Transverse colon (tissue), 4 donors: ENCODE measurements at regions of chr2 and their contacts with region 1.

Region 1: GRCh38 chr2:221831051-221831450 is 258.9 kb upstream of the EPHA4 start:
- DNase-seq: no peak
- H3K4me3 ChIP-seq: no peak overlapping the region
- H3K27ac ChIP-seq: no peak overlapping the region
- H3K4me1 ChIP-seq: no peaks in the 10 kb centered on the region
- H3K27me3 ChIP-seq: no peaks in the 10 kb centered on the region
- CTCF ChIP-seq: no peak
- EP300 ChIP-seq: no peak
- POLR2A ChIP-seq: no peak

Region 2: GRCh38 chr2:221908518-221908917 is 77.5 kb after region 1 on chr2:
- in situ Hi-C with region 1: no loop called
- intact Hi-C with region 1: loop called (anchors 2 kb)
- DNase-seq: no peak
- H3K4me3 ChIP-seq: no peak overlapping the region
- H3K27ac ChIP-seq: no peak overlapping the region
- H3K4me1 ChIP-seq: no peaks in the 10 kb centered on the region
- H3K27me3 ChIP-seq: no peaks in the 10 kb centered on the region
- CTCF ChIP-seq: no peak
- EP300 ChIP-seq: no peak
- POLR2A ChIP-seq: no peak

Region 3: GRCh38 chr2:222358876-222359275 is 527.8 kb after region 1 on chr2:
- in situ Hi-C with region 1: no loop called
- intact Hi-C with region 1: no loop called
- DNase-seq: no peak
- H3K4me3 ChIP-seq: no peak overlapping the region
- H3K27ac ChIP-seq: no peak overlapping the region
- H3K4me1 ChIP-seq: no peaks in the 10 kb centered on the region
- H3K27me3 ChIP-seq: no peaks in the 10 kb centered on the region
- CTCF ChIP-seq: no peak
- EP300 ChIP-seq: no peak
- POLR2A ChIP-seq: no peak